Heart right ventricle (tissue), 16 donors: ENCODE measurements at regions of chr17 and their contacts with region 1.

Region 1: DNA sequence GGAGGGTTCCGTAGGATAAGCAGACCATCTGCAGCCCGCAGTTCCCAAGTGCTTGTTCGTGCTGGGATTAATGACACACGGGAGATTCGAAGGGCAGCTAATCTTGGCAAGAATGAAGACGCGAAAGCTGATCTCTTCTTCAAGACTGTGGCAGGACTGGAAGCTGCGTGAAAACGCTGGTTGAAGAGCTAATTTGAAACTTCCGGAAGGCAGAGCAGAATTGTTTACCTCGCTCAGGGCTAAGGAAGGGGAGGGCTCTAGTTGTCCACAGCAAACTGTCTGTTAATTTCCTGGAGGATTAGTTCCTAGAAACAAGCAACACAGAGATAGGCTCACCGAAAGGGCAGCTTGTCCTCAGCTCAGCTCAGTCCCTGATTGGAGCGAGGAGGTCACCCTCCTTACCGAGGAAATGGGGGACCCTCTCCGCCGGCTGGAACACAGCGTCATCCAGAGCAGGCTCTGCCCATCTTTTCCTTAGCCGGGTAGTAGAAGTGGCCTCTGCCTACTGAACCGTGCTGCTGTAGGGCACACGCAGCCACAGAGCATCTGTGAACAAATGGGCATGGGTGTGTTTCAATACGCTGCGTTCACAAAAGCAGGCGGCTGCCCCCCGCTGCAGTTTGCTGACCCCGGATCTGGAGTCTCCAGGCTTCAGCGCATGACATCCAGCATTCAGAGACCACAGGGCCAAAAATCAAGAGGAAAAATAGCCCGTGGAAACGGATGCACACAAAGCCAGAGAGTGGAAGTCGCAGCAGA is 16.7 kb upstream of the BAIAP2 start:
- DNase-seq: no peak
- ATAC-seq: peak; percentile 12 to 78 (median 66)
- H3K4me3 ChIP-seq: peak overlapping the region in 9 of 10 donors; percentile 8 to 52 (median 39)
- H3K27ac ChIP-seq: peak overlapping the region in 8 of 10 donors; percentile 30 to 87 (median 75)
- H3K4me1 ChIP-seq: peaks cover 7 to 31% (median 27%) of the 10 kb centered on the region in 9 donors
- H3K27me3 ChIP-seq: no peaks in the 10 kb centered on the region
- CTCF ChIP-seq: no peak

Region 2: DNA sequence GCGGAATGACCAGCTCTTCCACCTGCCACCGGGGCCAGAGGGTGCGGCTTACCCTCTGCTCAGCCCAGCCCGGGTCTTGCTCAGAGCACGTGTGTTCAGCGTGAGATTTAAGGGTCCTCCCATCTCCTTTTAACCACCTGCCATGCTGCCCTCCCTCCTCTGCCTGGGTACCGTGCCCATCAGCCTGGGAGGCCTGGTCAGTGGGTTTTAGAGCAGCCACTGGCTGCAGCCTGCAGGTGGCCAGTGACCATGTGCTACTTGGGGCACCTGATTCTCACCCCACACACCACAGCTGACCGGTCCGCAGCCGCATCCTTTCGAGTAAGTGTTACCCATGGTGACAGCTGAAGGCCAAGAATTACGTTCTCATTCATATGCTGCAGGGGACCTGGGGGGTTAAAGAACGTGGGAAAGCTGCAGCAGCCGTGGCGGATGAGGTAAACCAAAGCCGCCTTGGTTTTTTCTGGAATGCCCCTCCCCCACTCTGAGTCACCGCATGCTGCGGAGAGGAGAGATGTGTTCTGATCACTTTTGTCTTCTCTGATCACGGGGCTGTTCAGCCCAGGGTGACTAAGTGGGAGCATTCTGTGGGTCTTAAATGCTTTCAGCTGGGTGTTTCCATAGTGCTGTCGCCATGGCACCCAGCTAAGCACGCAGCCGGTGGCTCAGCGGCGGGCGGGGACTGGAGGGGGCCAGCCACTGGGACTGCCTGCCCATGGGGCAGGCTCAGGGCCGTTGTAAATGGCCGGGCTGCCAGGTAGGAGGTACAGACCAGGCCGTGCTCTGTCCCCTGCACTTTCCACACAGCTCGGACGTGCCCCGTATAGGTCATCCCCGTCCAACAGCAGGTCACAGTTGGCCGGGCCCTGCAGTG is 76.5 kb after region 1 on chr17:
- intact Hi-C with region 1: loop called in 3 of 10 experiments (anchors 1 to 5 kb)
- DNase-seq: peak in 1 of 2 donors; percentile 57
- ATAC-seq: peak in 6 of 8 donors; percentile 10 to 50 (median 42)
- H3K4me3 ChIP-seq: no peak overlapping the region
- H3K27ac ChIP-seq: peak overlapping the region in 1 of 10 donors; percentile 64
- H3K4me1 ChIP-seq: peaks cover 5 to 55% (median 11%) of the 10 kb centered on the region in 9 donors
- H3K27me3 ChIP-seq: no peaks in the 10 kb centered on the region
- CTCF ChIP-seq: no peak

Region 3: GRCh38 chr17:81101614-81102306 is 83.5 kb after region 1 on chr17:
- intact Hi-C with region 1: loop called in 6 of 10 experiments (anchors 1 to 5 kb)
- DNase-seq: peak; percentile 73 to 84
- ATAC-seq: peak; percentile 72 to 90 (median 85)
- H3K4me3 ChIP-seq: no peak overlapping the region
- H3K27ac ChIP-seq: no peak overlapping the region
- H3K4me1 ChIP-seq: peaks cover 0 to 25% (median 18%) of the 10 kb centered on the region in 9 donors
- H3K27me3 ChIP-seq: no peaks in the 10 kb centered on the region
- CTCF ChIP-seq: peak; percentile 99 to 100 (median 100)

Region 4: DNA sequence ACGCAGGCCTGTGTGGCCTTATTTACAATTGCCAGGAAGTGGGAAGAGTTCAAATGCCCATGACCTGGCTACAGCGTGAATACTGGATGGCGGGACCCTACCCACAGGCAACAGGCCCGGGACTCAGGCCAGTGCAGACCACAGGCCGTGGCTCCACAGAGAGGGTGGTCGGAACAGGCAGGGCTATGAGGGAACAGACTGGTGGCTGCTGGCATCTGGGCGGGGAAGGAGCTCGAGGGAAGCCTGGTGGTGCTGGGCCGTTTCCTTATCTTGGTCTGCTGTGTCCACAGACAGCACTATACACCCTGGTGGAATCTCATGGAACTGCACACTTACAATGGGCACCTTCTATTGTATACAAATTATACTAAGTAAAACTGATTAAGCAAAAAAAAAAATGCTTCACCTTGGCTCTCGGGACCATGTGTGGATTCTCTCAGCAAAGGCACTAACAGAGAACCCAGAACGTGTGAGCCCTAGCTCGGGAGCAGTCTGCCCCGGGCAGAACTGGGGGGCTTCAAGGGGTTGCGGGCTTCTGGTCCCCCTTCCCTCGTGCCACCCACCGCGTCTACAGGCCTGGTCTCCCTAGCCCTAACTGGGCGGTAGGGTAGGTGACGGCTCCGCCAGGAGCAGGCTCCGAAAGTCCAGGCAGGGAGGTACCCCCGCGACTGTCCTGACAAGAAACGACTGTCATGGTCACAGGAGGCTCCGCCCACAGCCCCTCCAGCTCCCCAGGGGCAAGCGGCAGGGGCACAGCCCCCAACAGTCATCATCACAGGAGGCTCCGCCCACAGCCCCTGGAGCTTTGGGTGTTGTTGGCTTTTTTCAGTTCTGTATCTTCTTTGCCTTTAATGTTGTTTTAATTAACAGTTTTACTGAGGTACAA is 182.7 kb after region 1 on chr17:
- intact Hi-C with region 1: loop called in 1 of 10 experiments (anchors 10 kb)
- DNase-seq: peak in 1 of 2 donors; percentile 66
- ATAC-seq: peak in 7 of 8 donors; percentile 15 to 70 (median 63)
- H3K4me3 ChIP-seq: no peak overlapping the region
- H3K27ac ChIP-seq: no peak overlapping the region
- H3K4me1 ChIP-seq: peaks cover 0 to 33% (median 9%) of the 10 kb centered on the region in 9 donors
- H3K27me3 ChIP-seq: no peaks in the 10 kb centered on the region
- CTCF ChIP-seq: peak; percentile 36 to 71 (median 66)

Region 5: GRCh38 chr17:81228420-81228819 is 210.2 kb after region 1 on chr17:
- intact Hi-C with region 1: loop called in 1 of 10 experiments (anchors 5 kb)
- DNase-seq: no peak
- ATAC-seq: peak in 3 of 8 donors; percentile 13 to 24 (median 20)
- H3K4me3 ChIP-seq: no peak overlapping the region
- H3K27ac ChIP-seq: no peak overlapping the region
- H3K4me1 ChIP-seq: peaks cover 0 to 19% (median 4%) of the 10 kb centered on the region in 9 donors
- H3K27me3 ChIP-seq: no peaks in the 10 kb centered on the region
- CTCF ChIP-seq: no peak

Region 6: DNA sequence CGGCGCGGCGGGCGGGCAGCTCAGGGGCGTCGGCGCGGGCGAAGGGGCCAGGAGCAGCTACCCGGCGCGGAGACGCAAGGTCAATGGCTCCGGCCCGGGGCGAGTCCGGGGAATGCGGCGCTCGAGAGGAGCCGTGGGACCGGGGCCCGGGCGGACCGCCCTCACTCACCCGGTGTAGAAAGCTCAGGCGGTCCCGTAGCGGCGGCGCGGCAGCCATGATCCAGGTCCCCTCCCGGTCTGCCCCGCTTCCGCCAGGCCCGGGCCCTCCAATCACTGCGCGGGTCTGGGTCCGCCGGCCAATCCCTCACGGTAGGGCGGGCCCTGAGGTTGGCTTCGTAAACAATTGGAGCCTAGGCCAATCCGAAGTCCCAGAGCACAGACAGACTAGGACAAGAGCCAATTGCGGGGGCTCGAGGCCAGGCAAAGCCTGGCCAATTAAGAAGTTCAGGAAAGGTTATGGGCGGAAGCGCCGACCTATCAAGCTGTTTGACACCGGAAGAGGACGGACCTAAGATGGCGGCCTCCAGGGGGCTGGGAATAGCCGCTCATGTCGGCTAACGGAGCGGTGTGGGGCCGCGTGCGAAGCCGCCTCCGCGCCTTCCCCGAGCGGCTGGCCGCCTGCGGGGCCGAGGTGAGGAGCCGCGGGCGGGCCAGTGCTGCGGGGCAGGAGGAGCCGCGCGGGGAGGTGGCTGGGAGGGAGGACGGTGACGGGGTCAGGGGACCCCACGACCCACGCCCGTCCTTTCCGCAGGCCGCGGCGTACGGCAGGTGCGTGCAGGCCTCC is 220.8 kb after region 1 on chr17 and contains the starts of genes NDUFAF8 and TEPSIN:
- intact Hi-C with region 1: loop called in 1 of 10 experiments (anchors 10 kb)
- DNase-seq: peak; percentile 95 to 98
- ATAC-seq: peak; percentile 96 to 99 (median 98)
- H3K4me3 ChIP-seq: peak within 1 kb of the TSS; percentile 81 to 100 (median 92)
- H3K27ac ChIP-seq: peak within 1 kb of the TSS; percentile 59 to 90 (median 82)
- H3K4me1 ChIP-seq: peaks cover 10 to 52% (median 32%) of the 10 kb centered on the region in 9 donors
- H3K27me3 ChIP-seq: no peaks in the 10 kb centered on the region
- CTCF ChIP-seq: peak in 2 of 9 donors; percentile 8 to 25
- total RNA-seq, gene NDUFAF8: 49.6 to 74.8 (median 58.9) TPM
- total RNA-seq, gene TEPSIN: 6.2 to 21.4 (median 9.2) TPM